IMR-90 (cell line): ENCODE measurements at regions of chr10 and their contacts with region 1.

Region 1: GRCh38 chr10:78047314-78047891 is 13.7 kb downstream of the RPS24 start:
- DNase-seq: peak; percentile 87
- ATAC-seq: peak; percentile 87
- H3K4me3 ChIP-seq: no peak overlapping the region
- H3K27ac ChIP-seq: no peak overlapping the region
- H3K4me1 ChIP-seq: peaks cover 15% of the 10 kb centered on the region
- H3K27me3 ChIP-seq: no peaks in the 10 kb centered on the region
- CTCF ChIP-seq: peak; percentile 96
- POLR2A ChIP-seq: no peak
- RAD21 ChIP-seq: peak; percentile 98

Region 2: DNA sequence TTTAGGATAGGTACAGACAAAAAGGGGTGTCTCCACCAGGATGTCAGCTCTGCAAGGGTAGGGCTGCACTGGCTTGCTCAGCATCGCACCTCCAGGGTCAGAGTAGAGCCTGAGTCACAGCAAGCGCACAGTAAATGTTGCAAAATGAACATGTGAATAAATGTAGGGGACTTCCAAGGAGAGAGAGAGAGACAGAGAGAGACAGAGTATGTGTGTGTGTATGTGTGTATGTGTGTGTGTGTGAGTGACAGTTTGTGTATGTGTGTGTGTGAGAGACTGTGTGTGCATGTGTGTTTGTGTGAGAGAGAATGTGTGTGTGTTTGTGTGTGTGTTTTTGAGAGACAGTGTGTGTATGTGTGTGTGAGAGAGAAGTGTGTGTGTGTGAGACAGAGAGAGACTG is 149.6 kb after region 1 on chr10:
- CTCF ChIA-PET with region 1: no interaction called
- POLR2A ChIA-PET with region 1: no interaction called
- dilution Hi-C with region 1: no loop called
- in situ Hi-C with region 1: no loop called
- intact Hi-C with region 1: loop called (anchors 5 kb)
- DNase-seq: peak; percentile 96
- ATAC-seq: peak; percentile 88
- H3K4me3 ChIP-seq: no peak overlapping the region
- H3K27ac ChIP-seq: no peak overlapping the region
- H3K4me1 ChIP-seq: peaks cover 20% of the 10 kb centered on the region
- H3K27me3 ChIP-seq: 0 out of 2 replicates have a peak, but pooled peaks cover 4% of the 10 kb centered on the region
- CTCF ChIP-seq: no peak
- POLR2A ChIP-seq: no peak
- RAD21 ChIP-seq: 0 out of 2 replicates have a peak, but pooled peaks have one; percentile 13

Region 3: DNA sequence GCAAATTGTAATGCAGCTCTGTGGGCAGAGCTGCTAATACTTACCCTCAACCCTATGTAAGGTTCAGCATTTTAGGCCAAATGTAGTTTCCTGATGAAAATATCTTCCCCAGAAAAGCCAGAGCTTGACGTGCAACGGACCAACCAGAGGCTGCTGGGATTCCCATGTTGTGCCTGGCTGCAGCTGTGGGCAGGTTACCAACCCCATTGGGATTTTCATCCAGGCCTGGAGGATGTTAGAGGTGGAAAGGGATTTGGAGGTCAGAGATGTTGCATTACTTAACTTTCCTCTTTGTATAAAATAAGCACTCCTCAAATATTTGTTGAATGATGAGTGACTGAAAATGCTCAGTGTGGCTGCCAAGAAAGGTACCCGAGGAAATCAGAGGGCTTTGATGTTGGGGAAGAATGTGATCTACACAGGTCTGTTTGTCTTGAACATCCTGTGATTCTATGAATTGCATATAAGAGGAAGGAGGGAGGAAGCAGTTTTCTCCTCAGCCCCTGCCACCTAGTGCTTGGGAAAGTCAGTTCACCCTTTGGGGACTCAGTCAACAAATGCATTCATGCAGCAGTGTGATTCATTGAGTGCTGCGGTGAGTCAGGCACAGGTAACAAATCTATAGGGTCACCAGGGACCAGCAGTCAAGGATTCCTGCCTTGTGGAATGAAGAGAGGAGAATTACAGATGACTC is 473.5 kb after region 1 on chr10:
- CTCF ChIA-PET with region 1: no interaction called
- POLR2A ChIA-PET with region 1: no interaction called
- dilution Hi-C with region 1: no loop called
- in situ Hi-C with region 1: no loop called
- intact Hi-C with region 1: loop called (anchors 2 kb)
- DNase-seq: peak; percentile 65
- ATAC-seq: peak; percentile 72
- H3K4me3 ChIP-seq: no peak overlapping the region
- H3K27ac ChIP-seq: no peak overlapping the region
- H3K4me1 ChIP-seq: peaks cover 5% of the 10 kb centered on the region
- H3K27me3 ChIP-seq: no peaks in the 10 kb centered on the region; the same call in 1 of the 2 replicates
- CTCF ChIP-seq: peak; percentile 48
- POLR2A ChIP-seq: no peak
- RAD21 ChIP-seq: peak; percentile 62

Region 4: GRCh38 chr10:78756604-78757349 is 709.4 kb after region 1 on chr10:
- CTCF ChIA-PET with region 1: no interaction called
- POLR2A ChIA-PET with region 1: no interaction called
- dilution Hi-C with region 1: no loop called
- in situ Hi-C with region 1: no loop called
- intact Hi-C with region 1: loop called (anchors 10 kb)
- DNase-seq: peak; percentile 98
- ATAC-seq: peak; percentile 91
- H3K4me3 ChIP-seq: no peak overlapping the region
- H3K27ac ChIP-seq: peak overlapping the region; percentile 59
- H3K4me1 ChIP-seq: peaks cover 26% of the 10 kb centered on the region
- H3K27me3 ChIP-seq: no peaks in the 10 kb centered on the region
- CTCF ChIP-seq: no peak
- POLR2A ChIP-seq: no peak; the same call in 1 of the 2 replicates
- RAD21 ChIP-seq: peak; percentile 45

Region 5: DNA sequence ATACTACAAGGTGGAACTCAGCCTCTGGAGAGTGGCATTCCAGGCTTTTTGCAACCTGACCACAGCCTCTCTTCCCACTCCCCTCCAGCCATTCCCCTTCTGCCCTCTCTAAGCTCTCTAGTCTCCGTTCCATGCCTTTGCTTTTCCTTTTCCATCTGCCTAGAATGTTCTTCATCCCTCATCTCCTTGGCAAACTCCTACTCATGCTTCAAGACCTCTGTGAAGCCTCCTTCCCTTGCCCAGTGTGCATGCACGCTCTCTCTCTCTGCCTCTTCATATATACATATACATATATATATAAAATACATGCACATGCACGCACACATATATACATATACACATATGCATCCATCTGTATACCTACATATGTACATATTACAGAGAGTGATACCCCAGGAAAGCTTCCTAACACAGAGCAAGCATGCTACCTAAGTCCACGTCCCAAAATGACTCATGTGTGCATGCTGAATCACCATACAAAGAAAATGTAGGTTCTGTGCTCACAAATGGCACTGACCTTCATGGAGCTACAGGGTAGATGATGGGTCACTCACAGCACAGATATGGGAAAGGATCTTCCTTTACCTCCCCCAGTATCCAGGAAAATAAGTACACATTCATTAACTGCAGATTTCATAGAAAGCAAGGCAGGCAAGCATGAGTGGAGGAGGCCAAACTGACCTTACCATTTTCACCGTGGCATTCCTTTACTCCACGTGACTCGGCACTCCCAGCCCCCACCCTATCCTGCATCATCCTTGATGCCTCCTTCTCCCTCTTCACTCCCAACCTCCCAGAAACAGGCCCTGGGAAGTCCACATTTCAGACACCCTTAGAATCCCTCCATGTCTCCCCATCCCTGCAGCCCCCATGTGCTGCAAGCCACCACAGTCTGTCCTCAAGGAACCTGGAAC is 782.9 kb after region 1 on chr10:
- CTCF ChIA-PET with region 1: no interaction called
- POLR2A ChIA-PET with region 1: no interaction called
- dilution Hi-C with region 1: no loop called
- in situ Hi-C with region 1: no loop called
- intact Hi-C with region 1: no loop called
- DNase-seq: peak; percentile 78
- ATAC-seq: peak; percentile 71
- H3K4me3 ChIP-seq: no peak overlapping the region
- H3K27ac ChIP-seq: peak overlapping the region; percentile 71; the same call in 1 of the 2 replicates
- H3K4me1 ChIP-seq: peaks cover 16% of the 10 kb centered on the region
- H3K27me3 ChIP-seq: peaks cover 5% of the 10 kb centered on the region
- CTCF ChIP-seq: no peak
- POLR2A ChIP-seq: no peak
- RAD21 ChIP-seq: no peak

Region 6: DNA sequence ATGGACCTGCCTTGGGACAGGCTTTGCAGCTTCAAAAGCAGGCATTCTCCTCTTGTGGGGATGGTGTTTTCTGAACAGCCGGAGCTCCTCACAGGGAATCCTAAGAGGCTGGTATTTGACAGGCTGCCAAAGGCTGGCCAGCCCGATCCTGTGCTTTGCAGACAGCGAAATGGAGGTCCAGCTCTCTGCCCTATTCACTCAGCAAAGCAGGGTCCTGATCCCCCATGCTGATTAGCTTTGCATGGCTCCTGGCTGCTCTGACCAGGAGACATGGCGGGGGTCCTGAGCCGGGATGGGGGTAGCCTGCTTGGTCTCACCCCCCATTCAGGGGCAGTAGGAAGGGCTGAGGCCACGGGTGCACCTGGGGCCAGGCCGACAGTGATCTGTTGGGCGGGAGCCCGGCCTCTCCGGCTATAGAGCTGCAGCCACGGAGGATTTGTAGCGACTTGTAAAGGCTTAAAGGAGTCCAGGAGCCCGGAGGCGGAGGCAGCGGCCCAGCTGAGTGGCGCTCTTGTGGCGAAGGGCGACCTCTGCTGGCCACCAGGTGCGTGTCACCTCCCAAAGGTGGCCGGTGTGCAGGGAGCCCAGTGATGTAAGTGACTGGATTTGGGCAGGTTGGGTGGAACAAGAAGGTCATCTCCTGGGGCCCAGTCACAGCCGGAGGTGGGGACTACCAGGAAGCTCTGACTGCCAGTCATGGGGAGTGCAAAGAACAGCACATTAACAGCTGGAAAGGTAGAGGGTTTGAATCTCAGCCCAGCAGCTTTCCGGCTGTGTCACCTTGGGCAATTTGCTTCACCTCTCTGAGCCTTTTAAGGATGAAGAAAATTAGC is 1147.9 kb after region 1 on chr10:
- CTCF ChIA-PET with region 1: interaction called, 3 read pairs
- POLR2A ChIA-PET with region 1: no interaction called
- dilution Hi-C with region 1: no loop called
- in situ Hi-C with region 1: loop called (anchors 5 kb)
- intact Hi-C with region 1: loop called (anchors 1 kb)
- DNase-seq: peak; percentile 81
- ATAC-seq: peak; percentile 78
- H3K4me3 ChIP-seq: no peak overlapping the region
- H3K27ac ChIP-seq: peak overlapping the region; percentile 76
- H3K4me1 ChIP-seq: peaks cover 35% of the 10 kb centered on the region
- H3K27me3 ChIP-seq: no peaks in the 10 kb centered on the region
- CTCF ChIP-seq: peak; percentile 88
- POLR2A ChIP-seq: peak; percentile 59; the same call in 1 of the 2 replicates
- RAD21 ChIP-seq: peak; percentile 96